Right ventricle myocardium inferior (tissue), 1 donor: ENCODE measurements at regions of chr12 and their contacts with region 1.

Region 1: GRCh38 chr12:10140001-10140400 is 10.0 kb upstream of the CLEC7A start:
- DNase-seq: peak; percentile 54
- ATAC-seq: no peak

Region 2: GRCh38 chr12:10001171-10001776 is 138.7 kb before region 1 on chr12:
- intact Hi-C with region 1: loop called (anchors 5 kb)
- DNase-seq: no peak
- ATAC-seq: no peak

Region 3: GRCh38 chr12:10033783-10034545 is 106.0 kb before region 1 on chr12:
- intact Hi-C with region 1: loop called (anchors 2 kb)
- DNase-seq: no peak
- ATAC-seq: no peak

Region 4: GRCh38 chr12:10160659-10161385 is 20.8 kb after region 1 on chr12:
- intact Hi-C with region 1: no loop called
- DNase-seq: no peak
- ATAC-seq: peak; percentile 13